CD4-positive, alpha-beta memory T cell (primary cell): ENCODE measurements at regions of chr22 and their contacts with region 1.

Region 1: GRCh38 chr22:38317122-38317994 is at the start of gene CSNK1E:
- DNase-seq: peak; percentile 72 to 77 (median 76)
- H3K4me3 ChIP-seq: peak within 1 kb of the TSS; percentile 28 to 63
- H3K4me3 Mint-ChIP-seq: peak within 1 kb of the TSS; percentile 88 to 95 (median 90)
- H3K27ac ChIP-seq: peak within 1 kb of the TSS; percentile 77
- H3K27ac Mint-ChIP-seq: peak within 1 kb of the TSS; percentile 96 to 98 (median 98)
- H3K4me1 ChIP-seq: peaks cover 47% of the 10 kb centered on the region
- H3K4me1 Mint-ChIP-seq: peaks cover 31 to 52% (median 38%) of the 10 kb centered on the region in 4 donors
- H3K27me3 ChIP-seq: no peaks in the 10 kb centered on the region
- H3K27me3 Mint-ChIP-seq: no peaks in the 10 kb centered on the region
- total RNA-seq, gene CSNK1E: 100 to 103 TPM

Region 2: GRCh38 chr22:38201710-38202436 is 115.5 kb before region 1 on chr22 and contains the start of gene MAFF:
- CTCF ChIA-PET with region 1: no interaction called
- POLR2A ChIA-PET with region 1: no interaction called
- intact Hi-C with region 1: loop called (anchors 5 kb)
- DNase-seq: peak; percentile 77 to 93 (median 80)
- H3K4me3 ChIP-seq: peak within 1 kb of the TSS; percentile 80 to 90
- H3K4me3 Mint-ChIP-seq: peak within 1 kb of the TSS; percentile 87 to 93 (median 90)
- H3K27ac ChIP-seq: peak within 1 kb of the TSS; percentile 81
- H3K27ac Mint-ChIP-seq: peak within 1 kb of the TSS; percentile 90 to 98 (median 97)
- H3K4me1 ChIP-seq: peaks cover 32% of the 10 kb centered on the region
- H3K4me1 Mint-ChIP-seq: peaks cover 18 to 47% (median 26%) of the 10 kb centered on the region in 4 donors
- H3K27me3 ChIP-seq: no peaks in the 10 kb centered on the region
- H3K27me3 Mint-ChIP-seq: no peaks in the 10 kb centered on the region
- total RNA-seq, gene MAFF: 6.8 TPM

Region 3: DNA sequence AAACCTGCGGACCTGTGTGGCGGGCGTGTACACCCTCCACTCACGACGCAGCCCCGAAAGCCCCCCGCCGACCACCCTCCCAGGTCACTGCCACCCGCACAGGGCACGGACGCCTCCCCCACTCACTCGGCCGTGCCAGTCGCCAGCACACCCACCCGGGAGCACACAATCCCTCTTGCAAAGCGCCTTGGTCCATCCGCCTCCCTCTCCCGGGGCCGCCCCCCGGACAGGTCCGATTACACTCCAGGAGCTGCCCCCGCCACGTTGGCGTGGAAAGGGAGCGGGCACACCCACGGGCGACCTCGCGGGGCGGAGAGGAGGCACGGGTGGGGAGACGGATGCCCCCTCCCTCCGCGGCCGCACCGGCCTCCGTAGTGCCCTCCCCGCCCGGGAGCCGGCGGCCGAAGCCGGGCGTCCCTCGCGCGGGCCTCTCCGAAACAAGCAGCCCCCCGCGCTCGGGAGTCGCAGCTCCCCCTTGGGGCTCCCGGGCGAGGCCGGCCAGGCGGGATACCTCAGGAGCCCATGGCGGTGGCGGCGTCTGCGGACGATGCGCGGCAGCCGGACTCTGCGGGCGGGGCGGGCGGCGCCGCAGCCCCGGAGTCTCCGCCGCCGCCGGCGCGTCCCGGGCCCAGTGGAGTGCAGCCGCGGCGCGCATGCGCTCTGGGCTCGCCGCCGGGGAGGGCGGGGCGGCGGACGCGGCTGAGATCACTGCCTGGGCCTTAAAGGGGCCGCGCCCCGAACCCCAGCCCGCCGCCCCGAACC is 44.8 kb before region 1 on chr22 and contains the start of gene TMEM184B:
- CTCF ChIA-PET with region 1: no interaction called
- POLR2A ChIA-PET with region 1: interaction called, 7 read pairs
- intact Hi-C with region 1: loop called (anchors 1 kb)
- DNase-seq: peak; percentile 74 to 90 (median 85)
- H3K4me3 ChIP-seq: peak within 1 kb of the TSS; percentile 74 to 91
- H3K4me3 Mint-ChIP-seq: peak within 1 kb of the TSS; percentile 90 to 95 (median 94)
- H3K27ac ChIP-seq: peak within 1 kb of the TSS; percentile 90
- H3K27ac Mint-ChIP-seq: peak within 1 kb of the TSS; percentile 95 to 98 (median 97)
- H3K4me1 ChIP-seq: peaks cover 46% of the 10 kb centered on the region
- H3K4me1 Mint-ChIP-seq: peaks cover 40 to 62% (median 52%) of the 10 kb centered on the region in 4 donors
- H3K27me3 ChIP-seq: no peaks in the 10 kb centered on the region
- H3K27me3 Mint-ChIP-seq: peaks cover 0 to 1% of the 10 kb centered on the region in 2 donors
- total RNA-seq, gene TMEM184B: 35.7 to 36.6 TPM

Region 4: GRCh38 chr22:38305471-38306448 is 11.6 kb before region 1 on chr22:
- CTCF ChIA-PET with region 1: interaction called, 6 read pairs
- POLR2A ChIA-PET with region 1: interaction called, 22 read pairs
- intact Hi-C with region 1: no loop called
- DNase-seq: peak; percentile 29 to 70 (median 38)
- H3K4me3 ChIP-seq: peak overlapping the region; percentile 6 to 12
- H3K4me3 Mint-ChIP-seq: peak overlapping the region; percentile 55 to 85 (median 68)
- H3K27ac ChIP-seq: peak overlapping the region; percentile 47
- H3K27ac Mint-ChIP-seq: peak overlapping the region; percentile 51 to 92 (median 81)
- H3K4me1 ChIP-seq: peaks cover 19% of the 10 kb centered on the region
- H3K4me1 Mint-ChIP-seq: peaks cover 21 to 45% (median 34%) of the 10 kb centered on the region in 4 donors
- H3K27me3 ChIP-seq: no peaks in the 10 kb centered on the region
- H3K27me3 Mint-ChIP-seq: no peaks in the 10 kb centered on the region

Region 5: DNA sequence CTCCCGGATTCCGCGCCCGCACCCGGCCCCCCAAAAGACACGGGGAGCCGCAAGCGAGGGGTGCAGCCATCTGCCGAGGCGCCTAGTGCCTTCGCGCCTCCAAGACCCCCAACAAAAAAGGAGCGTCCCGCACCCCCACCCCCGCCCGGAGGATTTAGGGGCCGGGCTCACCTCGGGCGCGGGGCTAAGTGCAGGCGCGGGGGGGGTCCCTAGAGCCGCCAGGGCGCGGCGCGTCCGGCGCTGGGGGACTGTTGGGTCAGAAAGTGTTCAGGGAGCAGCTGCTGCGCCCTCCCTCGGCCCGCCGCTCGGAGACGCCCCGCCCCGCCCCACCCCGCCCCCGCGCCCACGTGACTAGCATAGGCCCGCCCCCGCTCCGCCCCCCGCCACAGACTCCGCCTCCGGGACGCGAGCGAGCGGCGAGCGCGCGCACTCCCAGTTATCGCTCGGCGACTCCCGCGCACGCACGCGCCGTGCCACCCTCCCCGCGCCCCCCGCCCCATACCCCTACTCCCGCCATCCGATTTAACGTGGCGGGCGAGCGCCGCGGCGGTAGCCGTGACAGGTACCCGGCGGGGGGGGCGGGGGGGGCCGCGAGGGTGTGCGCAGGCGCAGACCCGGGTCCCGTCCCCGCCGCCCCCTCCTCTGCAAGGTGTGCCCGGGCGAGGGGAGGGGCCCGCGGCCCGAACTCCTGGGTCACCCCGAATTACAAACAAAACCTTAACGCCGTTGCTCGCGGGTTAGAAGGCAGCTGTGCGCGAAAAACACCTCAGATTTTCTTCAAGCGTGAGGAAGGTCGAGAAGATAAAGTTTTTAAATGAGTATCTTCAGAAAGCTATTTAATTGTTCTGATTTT is 81.5 kb after region 1 on chr22:
- CTCF ChIA-PET with region 1: no interaction called
- POLR2A ChIA-PET with region 1: interaction called, 3 read pairs
- intact Hi-C with region 1: loop called (anchors 2 kb)
- DNase-seq: peak; percentile 78 to 85 (median 82)
- H3K4me3 ChIP-seq: peak overlapping the region; percentile 47 to 52
- H3K4me3 Mint-ChIP-seq: peak overlapping the region; percentile 78 to 89 (median 83)
- H3K27ac ChIP-seq: peak overlapping the region; percentile 46
- H3K27ac Mint-ChIP-seq: peak overlapping the region; percentile 37 to 88 (median 79)
- H3K4me1 ChIP-seq: peaks cover 35% of the 10 kb centered on the region
- H3K4me1 Mint-ChIP-seq: peaks cover 16 to 40% (median 23%) of the 10 kb centered on the region in 4 donors
- H3K27me3 ChIP-seq: no peaks in the 10 kb centered on the region
- H3K27me3 Mint-ChIP-seq: peaks cover 0 to 3% of the 10 kb centered on the region in 2 donors

Region 6: DNA sequence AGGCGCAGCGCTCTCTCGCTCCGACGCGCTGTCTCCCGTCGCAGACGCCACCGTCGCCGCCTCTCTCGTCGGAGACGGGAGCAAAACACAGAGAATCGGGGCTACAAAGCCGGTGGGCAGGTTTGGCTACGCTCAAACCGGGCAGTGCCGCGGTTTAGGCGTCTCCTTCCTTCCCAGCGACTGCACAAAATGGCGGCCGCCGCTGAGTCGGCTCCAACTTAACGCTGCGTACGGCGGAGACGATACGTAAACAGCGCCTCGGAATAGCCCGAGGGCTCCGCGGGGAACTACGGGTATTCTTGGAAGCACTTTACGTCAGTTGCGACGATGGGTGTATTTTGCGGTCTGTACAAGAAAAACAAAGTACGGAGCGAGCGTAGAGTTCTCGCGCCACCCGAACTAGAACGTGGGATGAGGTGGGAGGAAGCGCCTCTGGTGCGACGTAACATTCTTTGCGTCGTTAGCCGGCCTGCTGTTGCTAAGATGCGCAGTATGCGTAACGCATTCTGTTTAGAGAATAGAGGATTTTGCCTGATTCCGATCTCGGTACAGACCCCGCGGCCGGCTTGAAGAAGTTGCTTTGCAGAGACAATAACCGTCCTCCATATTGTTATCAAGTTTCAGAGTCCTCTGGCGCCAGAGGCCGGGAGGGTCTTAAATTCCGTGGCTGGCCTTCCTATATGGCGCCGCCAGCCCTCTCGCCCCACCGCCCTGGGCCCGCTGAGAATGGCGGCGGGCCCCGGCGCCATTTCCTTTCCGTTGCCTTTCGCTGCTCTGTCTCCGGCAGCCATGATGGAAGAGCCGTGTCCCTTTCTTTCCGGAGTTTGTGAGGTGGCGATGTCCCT is 189.0 kb after region 1 on chr22 and contains the start of gene DDX17:
- CTCF ChIA-PET with region 1: no interaction called
- POLR2A ChIA-PET with region 1: no interaction called
- intact Hi-C with region 1: loop called (anchors 5 kb)
- DNase-seq: peak; percentile 96 to 98 (median 96)
- H3K4me3 ChIP-seq: peak within 1 kb of the TSS; percentile 75 to 94
- H3K4me3 Mint-ChIP-seq: peak within 1 kb of the TSS; percentile 98 to 100 (median 99)
- H3K27ac ChIP-seq: peak within 1 kb of the TSS; percentile 99
- H3K27ac Mint-ChIP-seq: peak within 1 kb of the TSS; percentile 99 to 100 (median 100)
- H3K4me1 ChIP-seq: peaks cover 44% of the 10 kb centered on the region
- H3K4me1 Mint-ChIP-seq: peaks cover 37 to 54% (median 45%) of the 10 kb centered on the region in 4 donors
- H3K27me3 ChIP-seq: no peaks in the 10 kb centered on the region
- H3K27me3 Mint-ChIP-seq: no peaks in the 10 kb centered on the region
- total RNA-seq, gene DDX17: 927 to 960 TPM

Region 7: DNA sequence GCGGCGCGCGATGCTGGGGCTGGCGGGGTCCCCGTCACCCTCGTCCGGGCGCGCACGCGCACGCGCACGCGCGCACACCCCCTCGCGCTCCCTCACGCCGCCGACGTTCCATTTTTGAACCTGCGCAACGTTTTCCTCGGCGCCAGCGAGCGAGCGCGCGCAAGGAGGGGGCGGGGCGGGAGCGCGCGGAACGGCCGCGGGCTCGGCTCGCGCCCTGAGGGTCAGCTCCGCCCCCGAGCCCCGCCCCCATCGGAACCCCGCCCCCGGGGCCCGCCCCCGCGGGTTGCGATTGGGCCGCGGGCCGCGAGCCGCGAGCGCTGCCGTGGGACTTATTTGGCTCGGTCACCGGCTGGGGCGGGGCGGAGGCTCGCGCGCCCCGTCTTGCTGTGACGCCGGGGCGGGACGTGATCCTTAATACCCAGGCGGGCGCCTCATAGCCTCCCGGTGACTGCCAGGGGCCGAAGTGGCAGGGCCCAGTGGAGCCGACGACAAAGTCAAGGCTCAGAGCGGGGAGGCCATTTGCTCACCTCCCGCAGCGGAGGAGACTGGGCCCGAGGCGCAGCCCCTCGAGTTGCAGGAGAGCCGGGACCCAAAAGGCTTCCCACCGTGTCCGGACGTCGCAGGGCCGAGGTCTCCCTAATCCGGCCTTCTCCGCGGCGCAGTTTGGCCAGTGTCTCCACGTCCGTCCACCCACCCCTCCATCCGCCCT is 835.3 kb after region 1 on chr22 and contains the start of gene CBX7:
- CTCF ChIA-PET with region 1: no interaction called
- POLR2A ChIA-PET with region 1: no interaction called
- intact Hi-C with region 1: loop called (anchors 10 kb)
- DNase-seq: peak; percentile 90 to 96 (median 94)
- H3K4me3 ChIP-seq: peak within 1 kb of the TSS; percentile 55 to 79
- H3K4me3 Mint-ChIP-seq: peak within 1 kb of the TSS; percentile 84 to 91 (median 88)
- H3K27ac ChIP-seq: peak within 1 kb of the TSS; percentile 78
- H3K27ac Mint-ChIP-seq: peak within 1 kb of the TSS; percentile 88 to 99 (median 93)
- H3K4me1 ChIP-seq: peaks cover 51% of the 10 kb centered on the region
- H3K4me1 Mint-ChIP-seq: peaks cover 22 to 48% (median 35%) of the 10 kb centered on the region in 4 donors
- H3K27me3 ChIP-seq: peaks cover 7% of the 10 kb centered on the region
- H3K27me3 Mint-ChIP-seq: peaks cover 0 to 3% of the 10 kb centered on the region in 2 donors
- total RNA-seq, gene CBX7: 181 to 198 TPM